Posterior vena cava (tissue), 2 donors: ENCODE measurements at regions of chr16 and their contacts with region 1.

Region 1: DNA sequence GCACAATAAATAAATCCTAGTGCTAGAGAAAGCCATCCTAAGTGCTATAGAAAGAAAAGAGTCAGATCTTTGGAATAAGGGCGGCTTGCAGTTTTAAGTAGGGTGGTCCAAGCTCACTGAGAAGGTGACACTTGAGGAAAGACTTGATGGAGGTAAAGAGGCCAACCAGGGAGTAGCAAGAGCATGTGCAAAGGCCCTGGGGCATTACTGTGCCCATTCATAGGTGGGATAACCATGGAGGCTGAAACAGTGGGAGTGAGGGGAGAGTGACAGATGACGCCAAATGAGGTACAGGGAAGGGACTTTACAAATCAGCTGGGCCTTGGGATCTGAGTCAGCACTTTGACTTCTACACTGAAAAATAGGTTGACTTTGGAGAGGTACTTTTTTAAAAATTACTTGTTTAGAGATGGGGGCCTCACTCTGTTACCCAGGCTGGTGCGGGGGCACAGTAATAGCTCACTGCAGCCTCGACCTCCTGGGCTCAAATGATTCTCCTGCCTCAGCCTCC is 115.5 kb downstream of the ABCC1 start:
- DNase-seq: no peak

Region 2: GRCh38 chr16:16107839-16108238 is 42.9 kb after region 1 on chr16:
- intact Hi-C with region 1: loop called in 1 of 2 experiments (anchors 1 kb)
- DNase-seq: no peak

Region 3: DNA sequence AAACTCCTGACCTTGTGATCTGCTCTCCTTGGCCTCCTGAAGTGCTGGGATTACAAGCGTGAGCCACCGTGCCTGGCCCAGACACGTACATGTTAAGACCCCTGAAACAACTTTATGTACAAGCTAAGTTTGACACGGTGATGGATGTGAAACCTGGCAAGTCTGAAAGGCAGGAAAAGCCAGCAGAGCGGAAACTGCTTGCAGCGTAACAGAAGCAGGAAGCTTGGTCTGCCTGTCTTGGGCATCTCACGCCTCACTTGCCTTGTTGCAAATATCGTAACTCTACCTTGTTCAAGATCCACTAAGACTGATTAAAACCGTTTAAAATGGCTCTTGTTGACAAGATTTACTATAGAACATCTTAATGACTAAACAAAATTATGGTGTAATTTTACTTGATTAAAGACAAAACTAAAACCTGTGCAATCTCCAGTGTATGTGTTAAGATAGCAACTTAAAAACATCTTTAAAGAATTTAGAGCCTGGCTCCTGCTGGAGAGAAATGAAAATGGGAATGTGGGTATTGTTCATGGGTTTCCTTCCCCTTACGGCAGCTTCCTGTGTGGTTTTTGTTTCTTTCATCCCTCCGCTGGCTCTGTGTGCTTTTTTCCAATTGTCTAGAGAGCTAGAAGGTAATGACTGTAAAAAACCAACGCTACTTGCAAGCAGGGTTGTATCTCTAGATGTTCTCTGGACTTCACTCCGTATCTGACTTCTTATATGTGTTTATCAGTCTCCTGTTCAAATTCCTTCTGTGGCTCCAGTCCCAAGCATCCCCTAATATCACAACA is 928.2 kb after region 1 on chr16:
- intact Hi-C with region 1: no loop called
- DNase-seq: no peak